Aorta (tissue), 5 donors: ENCODE measurements at regions of chr5 and their contacts with region 1.

Region 1: GRCh38 chr5:172770675-172771438 is at the start of gene DUSP1:
- DNase-seq: peak; percentile 100
- ATAC-seq: peak; percentile 82
- H3K4me3 ChIP-seq: peak within 1 kb of the TSS; percentile 78 to 100
- H3K27ac ChIP-seq: peak within 1 kb of the TSS; percentile 83 to 100
- H3K4me1 ChIP-seq: no peaks in the 10 kb centered on the region
- H3K27me3 ChIP-seq: no peaks in the 10 kb centered on the region
- total RNA-seq, gene DUSP1: 293 to 1,994 TPM

Region 2: DNA sequence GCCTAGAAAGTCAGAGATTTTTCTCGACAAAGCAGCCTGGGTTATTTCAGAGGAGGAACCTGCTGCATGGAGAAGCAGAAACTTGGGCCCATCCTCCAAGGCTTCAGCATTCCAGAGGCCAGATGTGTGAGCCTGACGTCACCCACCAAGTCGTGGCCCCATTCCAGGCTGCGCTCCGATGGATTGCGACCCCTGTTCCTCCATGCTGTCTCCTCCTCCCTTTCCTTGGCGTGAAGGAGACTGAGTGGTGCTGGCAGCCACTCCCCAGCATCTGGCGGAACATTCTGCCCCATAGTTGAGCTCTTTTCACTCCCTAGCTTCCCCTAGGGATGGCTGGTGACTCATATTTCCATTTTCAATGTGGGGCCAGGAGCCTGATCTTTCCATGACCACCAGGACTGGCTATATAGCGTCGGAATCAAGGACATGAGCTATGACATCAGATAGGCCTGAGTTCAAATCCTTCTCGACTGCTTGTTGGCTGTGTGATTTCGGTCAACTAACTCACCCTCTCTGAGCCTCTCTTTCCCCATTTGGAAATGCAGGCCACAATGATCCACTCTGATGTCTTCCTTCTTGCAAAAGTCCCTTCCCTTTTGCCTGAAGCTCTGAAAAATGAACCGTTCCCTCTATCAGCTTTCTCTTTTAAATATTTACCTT is 24.6 kb after region 1 on chr5:
- intact Hi-C with region 1: loop called (anchors 1 to 2 kb)
- DNase-seq: peak; percentile 96 to 99
- ATAC-seq: peak; percentile 95
- H3K4me3 ChIP-seq: no peak overlapping the region
- H3K27ac ChIP-seq: peak overlapping the region; percentile 20 to 86
- H3K4me1 ChIP-seq: peaks cover 0 to 3% of the 10 kb centered on the region in 2 donors
- H3K27me3 ChIP-seq: no peaks in the 10 kb centered on the region

Region 3: GRCh38 chr5:172860520-172861443 is 89.9 kb after region 1 on chr5:
- intact Hi-C with region 1: loop called in 1 of 2 experiments (anchors 2 kb)
- DNase-seq: peak; percentile 93 to 95
- ATAC-seq: peak; percentile 95
- H3K4me3 ChIP-seq: no peak overlapping the region
- H3K27ac ChIP-seq: peak overlapping the region; percentile 79 to 99
- H3K4me1 ChIP-seq: peaks cover 0 to 8% of the 10 kb centered on the region in 2 donors
- H3K27me3 ChIP-seq: no peaks in the 10 kb centered on the region

Region 4: DNA sequence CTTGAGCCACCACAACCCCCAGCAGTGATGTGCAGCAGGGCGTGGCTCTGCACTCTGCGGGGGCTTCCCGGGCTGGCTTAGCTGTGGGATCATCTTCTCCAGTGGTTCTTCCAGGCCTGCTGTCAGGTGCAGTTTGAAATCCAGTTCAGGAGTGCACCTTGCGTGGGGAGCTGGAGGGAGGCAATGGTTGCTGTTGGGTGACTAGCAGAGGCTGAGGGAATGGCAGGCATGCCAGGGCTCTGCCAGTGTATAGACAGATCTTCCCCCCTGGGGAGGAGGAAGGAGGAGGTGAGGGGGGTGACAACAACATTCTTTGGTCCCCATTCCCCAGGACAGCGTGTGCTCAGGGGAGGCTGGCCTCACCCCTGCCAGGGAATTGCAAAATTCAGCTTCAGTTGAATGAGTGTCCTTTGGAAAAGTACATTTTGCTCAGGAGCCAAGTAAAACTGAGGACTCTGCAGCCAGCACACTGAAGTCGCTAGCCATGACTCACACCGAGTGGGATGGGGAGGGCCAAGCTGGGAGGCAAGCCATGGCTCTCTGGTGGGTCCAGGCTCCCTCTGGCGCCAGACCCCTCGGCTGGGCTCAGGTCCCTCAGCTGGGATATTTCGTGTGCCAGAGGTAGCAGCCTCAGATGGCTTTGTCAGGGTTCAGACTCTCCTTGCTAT is 98.2 kb after region 1 on chr5:
- intact Hi-C with region 1: loop called (anchors 2 to 5 kb)
- DNase-seq: peak; percentile 91 to 94
- ATAC-seq: peak; percentile 89
- H3K4me3 ChIP-seq: no peak overlapping the region
- H3K27ac ChIP-seq: peak overlapping the region; percentile 80 to 91
- H3K4me1 ChIP-seq: peaks cover 3 to 4% of the 10 kb centered on the region in 2 donors
- H3K27me3 ChIP-seq: no peaks in the 10 kb centered on the region

Region 5: GRCh38 chr5:172902497-172903200 is 131.8 kb after region 1 on chr5:
- intact Hi-C with region 1: loop called (anchors 2 to 5 kb)
- DNase-seq: peak; percentile 86 to 96
- ATAC-seq: peak; percentile 61
- H3K4me3 ChIP-seq: no peak overlapping the region
- H3K27ac ChIP-seq: peak overlapping the region; percentile 97 to 99
- H3K4me1 ChIP-seq: peaks cover 0 to 6% of the 10 kb centered on the region in 2 donors
- H3K27me3 ChIP-seq: no peaks in the 10 kb centered on the region

Region 6: GRCh38 chr5:172932313-172933017 is 161.6 kb after region 1 on chr5:
- intact Hi-C with region 1: loop called in 1 of 2 experiments (anchors 2 kb)
- DNase-seq: peak; percentile 86 to 94
- ATAC-seq: peak; percentile 93
- H3K4me3 ChIP-seq: no peak overlapping the region
- H3K27ac ChIP-seq: peak overlapping the region; percentile 51 to 97
- H3K4me1 ChIP-seq: peaks cover 0 to 5% of the 10 kb centered on the region in 2 donors
- H3K27me3 ChIP-seq: no peaks in the 10 kb centered on the region

Region 7: GRCh38 chr5:172958331-172959046 is 187.6 kb after region 1 on chr5:
- intact Hi-C with region 1: loop called (anchors 1 to 5 kb)
- DNase-seq: peak; percentile 80 to 90
- ATAC-seq: peak; percentile 86
- H3K4me3 ChIP-seq: no peak overlapping the region
- H3K27ac ChIP-seq: peak overlapping the region; percentile 29 to 61
- H3K4me1 ChIP-seq: no peaks in the 10 kb centered on the region
- H3K27me3 ChIP-seq: no peaks in the 10 kb centered on the region